ENCODE measurements at regions of chr3 and their contacts with region 1.

Region 1: GRCh38 chr3:35639254-35640186 is at the start of gene ARPP21:
- DNase-seq: peak; percentile 77 to 89
- ATAC-seq: peak; percentile 86 to 89 (median 88)
- H3K4me3 ChIP-seq: peak within 1 kb of the TSS; percentile 80
- H3K27ac ChIP-seq: peak within 1 kb of the TSS; percentile 90
- H3K4me1 ChIP-seq: no peaks in the 10 kb centered on the region
- H3K27me3 ChIP-seq: no peaks in the 10 kb centered on the region
- CTCF ChIP-seq: no peak
- total RNA-seq, gene ARPP21: 99.6 to 336 (median 123) TPM

Region 2: DNA sequence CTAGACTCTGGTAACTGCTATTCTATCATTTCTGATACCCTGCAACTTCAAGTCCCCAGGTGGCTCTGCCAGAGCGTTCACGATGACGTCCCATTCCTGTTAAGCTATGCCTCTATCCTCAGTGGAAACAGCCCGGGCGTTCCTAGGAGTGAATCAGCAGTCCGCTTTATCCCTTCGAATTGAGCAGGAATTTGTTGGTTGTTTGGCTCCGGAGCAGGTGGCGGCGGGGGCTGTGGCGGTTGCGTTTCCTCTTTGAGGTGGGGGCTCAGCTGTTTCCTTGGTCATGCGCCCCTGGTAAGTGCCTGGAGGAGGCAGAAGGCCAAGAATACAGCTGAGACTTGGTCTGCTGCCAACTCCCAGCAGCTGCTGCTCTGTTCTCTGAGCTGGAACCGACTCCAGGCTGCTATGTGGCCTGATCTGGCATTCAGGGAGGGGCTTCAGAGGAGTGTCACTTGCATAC is 25.0 kb after region 1 on chr3:
- intact Hi-C with region 1: loop called in 1 of 2 experiments (anchors 1 kb)
- DNase-seq: peak; percentile 84 to 91
- ATAC-seq: peak; percentile 75 to 85 (median 82)
- H3K4me3 ChIP-seq: peak overlapping the region; percentile 51
- H3K27ac ChIP-seq: peak overlapping the region; percentile 89
- H3K4me1 ChIP-seq: peaks cover 70% of the 10 kb centered on the region
- H3K27me3 ChIP-seq: no peaks in the 10 kb centered on the region
- CTCF ChIP-seq: no peak

Region 3: GRCh38 chr3:35724106-35724505 is 84.6 kb after region 1 on chr3:
- intact Hi-C with region 1: no loop called
- DNase-seq: no peak
- ATAC-seq: peak; percentile 31 to 72 (median 46)
- H3K4me3 ChIP-seq: no peak overlapping the region
- H3K27ac ChIP-seq: no peak overlapping the region
- H3K4me1 ChIP-seq: no peaks in the 10 kb centered on the region
- H3K27me3 ChIP-seq: no peaks in the 10 kb centered on the region
- CTCF ChIP-seq: no peak

Measured in psoas muscle (tissue), 8 donors.